Activated naive CD4-positive, alpha-beta T cell treated with anti-CD3 and anti-CD28 coated beads for 36 hours (primary cell): ENCODE measurements at regions of chr17 and their contacts with region 1.

Region 1: GRCh38 chr17:17729620-17730249 is 48.5 kb downstream of the RAI1 start:
- DNase-seq: peak; percentile 78
- H3K4me3 Mint-ChIP-seq: no peak overlapping the region
- H3K27ac Mint-ChIP-seq: no peak overlapping the region
- H3K4me1 Mint-ChIP-seq: peaks cover 21% of the 10 kb centered on the region
- H3K27me3 Mint-ChIP-seq: no peaks in the 10 kb centered on the region

Region 2: GRCh38 chr17:17792551-17793377 is 63.0 kb after region 1 on chr17:
- CTCF ChIA-PET with region 1: no interaction called
- intact Hi-C with region 1: loop called (anchors 2 kb)
- DNase-seq: peak; percentile 82
- H3K4me3 Mint-ChIP-seq: no peak overlapping the region
- H3K27ac Mint-ChIP-seq: peak overlapping the region; percentile 37
- H3K4me1 Mint-ChIP-seq: peaks cover 20% of the 10 kb centered on the region
- H3K27me3 Mint-ChIP-seq: no peaks in the 10 kb centered on the region

Region 3: DNA sequence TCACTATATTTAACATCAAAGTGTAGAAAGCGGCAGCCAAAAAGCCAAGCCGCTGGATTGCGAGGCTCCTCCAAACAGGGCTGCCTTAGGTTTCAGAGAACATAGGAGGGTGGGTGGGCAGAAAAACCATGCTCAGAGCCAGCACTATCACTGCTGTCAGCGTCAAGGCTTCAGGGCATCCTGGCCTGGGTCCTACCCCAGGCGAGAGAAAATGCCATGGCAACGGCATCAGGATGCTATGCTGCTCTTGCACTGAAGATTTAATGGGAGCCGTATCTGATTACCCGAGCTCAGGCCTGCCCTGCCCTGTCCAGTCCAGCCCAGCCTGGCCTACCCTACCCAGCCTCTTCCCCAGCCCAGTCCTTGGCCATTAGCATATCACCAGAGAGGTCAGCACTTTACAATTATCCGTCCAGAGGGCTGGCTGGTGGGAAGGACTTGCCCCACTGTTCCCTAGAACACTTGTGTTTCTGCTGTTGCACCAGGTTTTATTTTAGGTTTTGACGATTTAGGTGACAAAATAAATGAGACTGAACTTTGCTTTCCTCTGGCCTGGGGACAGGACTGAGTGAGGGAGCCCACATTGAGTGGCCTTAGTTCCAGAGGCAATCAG is 181.4 kb after region 1 on chr17:
- CTCF ChIA-PET with region 1: no interaction called
- intact Hi-C with region 1: no loop called
- DNase-seq: no peak
- H3K4me3 Mint-ChIP-seq: no peak overlapping the region
- H3K27ac Mint-ChIP-seq: no peak overlapping the region
- H3K4me1 Mint-ChIP-seq: peaks cover 8% of the 10 kb centered on the region
- H3K27me3 Mint-ChIP-seq: no peaks in the 10 kb centered on the region